Naive thymus-derived CD4-positive, alpha-beta T cell (primary cell): ENCODE measurements at regions of chr19 and their contacts with region 1.

Region 1: GRCh38 chr19:51338563-51339312 is 3.2 kb downstream of the VSIG10L start:
- DNase-seq: peak; percentile 66 to 90 (median 82)
- ATAC-seq: peak; percentile 83
- H3K4me3 ChIP-seq: peak overlapping the region; percentile 65
- H3K4me3 Mint-ChIP-seq: peak overlapping the region; percentile 83 to 94 (median 88)
- H3K27ac ChIP-seq: no peak overlapping the region
- H3K27ac Mint-ChIP-seq: peak overlapping the region in 6 of 9 donors; percentile 7 to 75 (median 60)
- H3K4me1 ChIP-seq: peaks cover 10 to 11% of the 10 kb centered on the region in 2 donors
- H3K4me1 Mint-ChIP-seq: peaks cover 14 to 24% (median 19%) of the 10 kb centered on the region in 7 donors
- H3K27me3 ChIP-seq: no peaks in the 10 kb centered on the region
- H3K27me3 Mint-ChIP-seq: peaks cover 0 to 13% (median 4%) of the 10 kb centered on the region in 5 donors

Region 2: GRCh38 chr19:51372649-51373504 is 34.1 kb after region 1 on chr19 and contains the start of gene NKG7:
- CTCF ChIA-PET with region 1: no interaction called
- POLR2A ChIA-PET with region 1: no interaction called
- intact Hi-C with region 1: no loop called
- DNase-seq: peak in 1 of 9 donors; percentile 77
- ATAC-seq: peak; percentile 71
- H3K4me3 ChIP-seq: peak within 1 kb of the TSS; percentile 37
- H3K4me3 Mint-ChIP-seq: peak within 1 kb of the TSS in 5 of 10 donors; percentile 38 to 88 (median 77)
- H3K27ac ChIP-seq: peak within 1 kb of the TSS; percentile 38
- H3K27ac Mint-ChIP-seq: peak within 1 kb of the TSS in 8 of 9 donors; percentile 60 to 94 (median 86)
- H3K4me1 ChIP-seq: peaks cover 16 to 53% of the 10 kb centered on the region in 2 donors
- H3K4me1 Mint-ChIP-seq: peaks cover 42 to 82% (median 52%) of the 10 kb centered on the region in 7 donors
- H3K27me3 ChIP-seq: no peaks in the 10 kb centered on the region
- H3K27me3 Mint-ChIP-seq: no peaks in the 10 kb centered on the region
- total RNA-seq, gene NKG7: 3.9 to 336 (median 62.3) TPM

Region 3: DNA sequence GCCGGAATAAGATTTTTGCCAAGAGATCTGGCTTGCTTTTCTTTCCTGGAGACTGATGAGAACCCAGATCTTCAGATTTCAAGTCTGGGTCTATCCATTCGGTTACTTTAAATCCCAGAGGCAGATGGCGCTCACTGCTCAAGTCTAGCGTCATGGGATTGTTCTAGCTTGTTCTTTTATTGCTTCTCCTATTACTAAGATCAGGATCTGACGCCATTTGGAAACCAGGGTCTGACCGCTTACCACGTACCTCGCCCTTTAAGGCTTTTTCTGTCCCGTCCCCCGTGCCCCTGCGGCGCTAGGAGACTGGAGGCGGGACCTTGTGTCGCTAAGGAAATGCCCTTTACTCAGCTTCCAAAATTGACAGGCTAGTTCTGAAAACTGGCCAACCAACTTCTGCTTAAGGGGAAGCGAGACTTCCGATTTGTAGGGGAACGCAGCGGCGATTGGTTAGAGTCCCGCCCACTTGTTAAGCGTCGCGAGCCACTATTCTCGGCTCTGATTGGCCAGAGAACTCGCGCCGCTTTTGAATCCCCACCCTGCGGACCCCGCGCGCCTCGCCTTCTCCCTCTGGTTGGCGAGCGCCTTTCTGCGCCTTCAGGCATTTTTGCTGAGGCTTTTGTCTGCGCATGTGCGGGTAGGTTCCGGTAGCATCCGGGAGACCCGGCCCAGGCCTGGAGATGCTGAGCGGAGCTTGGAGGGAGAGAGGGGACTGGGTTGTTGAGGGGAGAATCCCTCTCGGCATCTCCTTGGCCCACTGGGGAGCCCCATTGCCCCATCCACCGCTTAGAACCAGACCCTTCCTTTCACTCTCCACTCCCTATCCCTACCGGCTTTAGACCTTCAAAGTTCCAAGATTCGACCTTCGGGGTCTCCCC is 55.5 kb after region 1 on chr19:
- CTCF ChIA-PET with region 1: no interaction called
- POLR2A ChIA-PET with region 1: no interaction called
- intact Hi-C with region 1: loop called (anchors 1 kb)
- DNase-seq: peak; percentile 64 to 91 (median 86)
- ATAC-seq: peak; percentile 95
- H3K4me3 ChIP-seq: peak overlapping the region; percentile 46
- H3K4me3 Mint-ChIP-seq: peak overlapping the region; percentile 79 to 91 (median 86)
- H3K27ac ChIP-seq: peak overlapping the region; percentile 50
- H3K27ac Mint-ChIP-seq: peak overlapping the region; percentile 32 to 97 (median 73)
- H3K4me1 ChIP-seq: peaks cover 0 to 14% of the 10 kb centered on the region in 2 donors
- H3K4me1 Mint-ChIP-seq: peaks cover 6 to 60% (median 16%) of the 10 kb centered on the region in 7 donors
- H3K27me3 ChIP-seq: no peaks in the 10 kb centered on the region
- H3K27me3 Mint-ChIP-seq: peaks cover 0 to 4% (median 0%) of the 10 kb centered on the region in 5 donors

Region 4: DNA sequence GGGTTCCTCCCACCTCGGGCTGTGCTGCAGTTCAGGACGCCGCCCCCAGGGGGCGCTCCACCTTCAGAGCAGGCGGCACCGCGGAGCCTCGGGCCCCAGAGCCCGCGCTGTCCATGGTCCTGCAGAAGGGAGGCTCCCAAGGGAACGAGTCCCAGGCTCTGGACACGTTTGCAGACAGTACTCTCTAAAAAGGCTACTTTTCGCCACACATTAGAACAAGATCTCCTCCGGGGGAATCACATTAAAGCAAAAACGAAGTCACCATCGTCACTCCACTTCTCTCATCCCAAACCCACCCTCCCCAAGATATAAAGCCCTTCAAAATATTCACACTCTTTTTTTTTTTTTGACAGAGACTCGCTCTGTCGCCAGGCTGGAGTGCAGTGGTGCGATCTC is 83.3 kb after region 1 on chr19:
- CTCF ChIA-PET with region 1: interaction called, 3 read pairs
- POLR2A ChIA-PET with region 1: no interaction called
- intact Hi-C with region 1: loop called (anchors 1 kb)
- DNase-seq: peak; percentile 41 to 96 (median 61)
- ATAC-seq: peak; percentile 90
- H3K4me3 ChIP-seq: no peak overlapping the region
- H3K4me3 Mint-ChIP-seq: peak overlapping the region in 3 of 10 donors; percentile 4 to 12 (median 8)
- H3K27ac ChIP-seq: no peak overlapping the region
- H3K27ac Mint-ChIP-seq: peak overlapping the region in 1 of 9 donors; percentile 2
- H3K4me1 ChIP-seq: no peaks in the 10 kb centered on the region
- H3K4me1 Mint-ChIP-seq: peaks cover 0 to 11% (median 0%) of the 10 kb centered on the region in 7 donors
- H3K27me3 ChIP-seq: no peaks in the 10 kb centered on the region
- H3K27me3 Mint-ChIP-seq: peaks cover 19 to 40% (median 31%) of the 10 kb centered on the region in 5 donors

Region 5: GRCh38 chr19:51473009-51473707 is 134.4 kb after region 1 on chr19:
- CTCF ChIA-PET with region 1: no interaction called
- POLR2A ChIA-PET with region 1: no interaction called
- intact Hi-C with region 1: loop called in 1 of 2 experiments (anchors 1 kb)
- DNase-seq: peak; percentile 39 to 83 (median 59)
- ATAC-seq: peak; percentile 85
- H3K4me3 ChIP-seq: no peak overlapping the region
- H3K4me3 Mint-ChIP-seq: no peak overlapping the region
- H3K27ac ChIP-seq: no peak overlapping the region
- H3K27ac Mint-ChIP-seq: no peak overlapping the region
- H3K4me1 ChIP-seq: no peaks in the 10 kb centered on the region
- H3K4me1 Mint-ChIP-seq: peaks cover 0 to 7% (median 0%) of the 10 kb centered on the region in 7 donors
- H3K27me3 ChIP-seq: no peaks in the 10 kb centered on the region
- H3K27me3 Mint-ChIP-seq: peaks cover 17 to 27% (median 20%) of the 10 kb centered on the region in 5 donors

Region 6: DNA sequence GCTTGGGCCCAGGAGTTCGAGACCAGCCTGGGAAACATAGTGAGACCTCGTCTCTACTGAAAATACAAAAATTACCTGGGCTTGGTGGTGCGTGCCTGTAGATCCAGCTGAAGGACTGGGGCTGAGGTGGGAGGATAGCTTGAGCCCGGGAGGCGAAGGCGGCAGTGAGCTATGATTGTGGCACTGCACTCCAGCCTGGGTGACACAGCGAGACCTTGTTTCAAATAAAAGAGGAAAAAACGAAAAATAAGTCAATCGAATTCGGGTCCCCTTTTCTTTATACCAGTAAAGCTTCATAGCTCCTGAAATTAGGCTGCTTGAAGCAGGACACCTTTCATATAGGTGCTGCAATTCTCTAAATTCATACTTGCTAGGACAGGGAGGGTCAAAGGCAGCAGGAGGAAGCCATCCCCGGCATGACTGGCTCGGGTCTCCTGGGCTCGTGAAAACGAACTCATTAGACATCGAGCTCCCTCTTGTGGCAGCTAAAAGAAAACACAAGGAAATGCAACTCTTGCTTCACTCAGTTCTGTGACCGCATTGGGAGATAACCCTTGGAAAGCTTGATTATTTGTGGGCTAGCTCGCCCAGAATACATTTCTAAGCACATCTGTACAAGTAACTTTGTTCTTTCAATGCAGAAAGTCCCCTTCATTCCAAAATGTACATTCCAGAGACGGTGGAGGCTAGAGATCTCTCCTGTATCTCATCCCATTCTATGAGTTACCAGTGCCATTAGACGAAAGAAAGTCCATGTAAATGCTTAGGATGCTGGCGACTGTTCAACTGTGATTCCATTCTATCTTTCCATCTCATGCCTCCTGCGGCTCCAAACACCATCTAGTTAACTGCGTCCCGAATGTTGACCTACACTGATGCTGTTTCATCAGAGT is 439.1 kb after region 1 on chr19:
- CTCF ChIA-PET with region 1: interaction called, 4 read pairs
- POLR2A ChIA-PET with region 1: no interaction called
- intact Hi-C with region 1: loop called in 1 of 2 experiments (anchors 2 kb)
- DNase-seq: peak in 8 of 9 donors; percentile 4 to 43 (median 35)
- ATAC-seq: peak; percentile 76
- H3K4me3 ChIP-seq: no peak overlapping the region
- H3K4me3 Mint-ChIP-seq: no peak overlapping the region
- H3K27ac ChIP-seq: no peak overlapping the region
- H3K27ac Mint-ChIP-seq: no peak overlapping the region
- H3K4me1 ChIP-seq: no peaks in the 10 kb centered on the region
- H3K4me1 Mint-ChIP-seq: peaks cover 0 to 7% (median 0%) of the 10 kb centered on the region in 7 donors
- H3K27me3 ChIP-seq: peaks cover 0 to 8% of the 10 kb centered on the region in 2 donors
- H3K27me3 Mint-ChIP-seq: peaks cover 13 to 71% (median 68%) of the 10 kb centered on the region in 5 donors